Psoas muscle (tissue), 8 donors: ENCODE measurements at regions of chr17 and their contacts with region 1.

Region 1: GRCh38 chr17:76868176-76868668 is at the start of gene MGAT5B:
- DNase-seq: peak; percentile 80 to 90
- ATAC-seq: peak; percentile 91 to 98 (median 94)
- H3K4me3 ChIP-seq: peak within 1 kb of the TSS; percentile 49
- H3K27ac ChIP-seq: no peak within 1 kb of the TSS
- H3K4me1 ChIP-seq: peaks cover 14% of the 10 kb centered on the region
- H3K27me3 ChIP-seq: peaks cover 0 to 34% (median 19%) of the 10 kb centered on the region in 3 donors
- CTCF ChIP-seq: peak; percentile 93
- total RNA-seq, gene MGAT5B: 0.06 to 0.34 TPM in 2 of 4 donors, not detected in the others

Region 2: GRCh38 chr17:76578344-76578979 is 289.8 kb before region 1 on chr17:
- intact Hi-C with region 1: no loop called
- DNase-seq: no peak
- ATAC-seq: no peak
- H3K4me3 ChIP-seq: no peak overlapping the region
- H3K27ac ChIP-seq: no peak overlapping the region
- H3K4me1 ChIP-seq: peaks cover 11% of the 10 kb centered on the region
- H3K27me3 ChIP-seq: no peaks in the 10 kb centered on the region
- CTCF ChIP-seq: no peak

Region 3: DNA sequence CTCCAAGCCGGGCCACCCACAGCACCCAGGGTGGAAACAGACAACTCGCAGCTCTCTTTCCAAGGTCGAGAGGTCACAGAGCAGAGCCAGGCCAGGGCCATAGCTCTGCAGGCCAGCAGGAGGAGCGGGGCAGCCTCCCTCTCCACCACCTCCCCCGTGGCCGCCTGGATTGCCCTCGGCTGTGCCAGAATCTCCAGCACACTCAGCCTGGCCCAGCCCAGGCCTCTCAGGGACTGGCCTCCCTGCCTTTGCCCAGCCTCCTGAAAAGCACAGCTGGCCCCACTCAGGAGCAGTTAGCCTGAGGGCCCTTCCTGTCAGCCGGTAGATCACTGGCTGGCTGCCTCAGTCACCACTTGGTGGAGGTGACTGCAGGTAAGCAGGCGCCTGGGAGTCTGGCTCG is 186.7 kb after region 1 on chr17:
- intact Hi-C with region 1: loop called (anchors 1 kb)
- DNase-seq: no peak
- ATAC-seq: no peak
- H3K4me3 ChIP-seq: no peak overlapping the region
- H3K27ac ChIP-seq: no peak overlapping the region
- H3K4me1 ChIP-seq: no peaks in the 10 kb centered on the region
- H3K27me3 ChIP-seq: peaks cover 0 to 67% (median 10%) of the 10 kb centered on the region in 3 donors
- CTCF ChIP-seq: no peak

Region 4: GRCh38 chr17:77066165-77066564 is 197.9 kb after region 1 on chr17:
- intact Hi-C with region 1: loop called in 1 of 2 experiments (anchors 1 kb)
- DNase-seq: no peak
- ATAC-seq: no peak
- H3K4me3 ChIP-seq: no peak overlapping the region
- H3K27ac ChIP-seq: no peak overlapping the region
- H3K4me1 ChIP-seq: no peaks in the 10 kb centered on the region
- H3K27me3 ChIP-seq: peaks cover 0 to 20% (median 0%) of the 10 kb centered on the region in 3 donors
- CTCF ChIP-seq: no peak

Region 5: DNA sequence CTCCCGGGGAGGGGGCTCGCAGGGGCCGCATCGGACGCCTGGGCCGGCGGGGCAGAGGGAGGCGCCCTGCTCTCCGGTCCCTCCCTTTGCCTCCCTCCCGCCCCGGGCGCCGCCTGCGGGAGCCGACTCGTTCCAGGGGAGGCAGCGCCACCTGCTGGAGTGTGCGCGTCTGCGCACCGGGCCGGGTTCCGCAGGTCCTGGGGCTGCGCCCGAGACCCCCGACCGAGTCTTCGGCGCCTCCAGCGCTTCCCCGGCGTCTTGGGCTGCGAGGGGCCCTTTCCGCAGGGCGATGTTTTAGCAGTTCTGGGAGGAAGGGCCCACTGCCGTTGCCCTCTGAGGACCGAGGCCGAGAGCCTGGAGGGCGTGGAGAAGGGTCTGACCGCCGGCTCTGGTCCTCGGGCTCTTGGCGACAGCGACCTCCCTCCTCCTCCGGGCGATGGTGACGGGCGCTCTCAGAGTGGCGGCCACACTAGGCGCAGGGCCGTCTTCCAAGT is 378.9 kb after region 1 on chr17:
- intact Hi-C with region 1: loop called (anchors 5 kb)
- DNase-seq: peak; percentile 87 to 93
- ATAC-seq: peak; percentile 92 to 98 (median 96)
- H3K4me3 ChIP-seq: peak overlapping the region; percentile 79
- H3K27ac ChIP-seq: peak overlapping the region; percentile 51
- H3K4me1 ChIP-seq: peaks cover 5% of the 10 kb centered on the region
- H3K27me3 ChIP-seq: peaks cover 0 to 5% (median 0%) of the 10 kb centered on the region in 3 donors
- CTCF ChIP-seq: peak; percentile 98